GM12878 (cell line): ENCODE measurements at regions of chr1 and their contacts with region 1.

Region 1: DNA sequence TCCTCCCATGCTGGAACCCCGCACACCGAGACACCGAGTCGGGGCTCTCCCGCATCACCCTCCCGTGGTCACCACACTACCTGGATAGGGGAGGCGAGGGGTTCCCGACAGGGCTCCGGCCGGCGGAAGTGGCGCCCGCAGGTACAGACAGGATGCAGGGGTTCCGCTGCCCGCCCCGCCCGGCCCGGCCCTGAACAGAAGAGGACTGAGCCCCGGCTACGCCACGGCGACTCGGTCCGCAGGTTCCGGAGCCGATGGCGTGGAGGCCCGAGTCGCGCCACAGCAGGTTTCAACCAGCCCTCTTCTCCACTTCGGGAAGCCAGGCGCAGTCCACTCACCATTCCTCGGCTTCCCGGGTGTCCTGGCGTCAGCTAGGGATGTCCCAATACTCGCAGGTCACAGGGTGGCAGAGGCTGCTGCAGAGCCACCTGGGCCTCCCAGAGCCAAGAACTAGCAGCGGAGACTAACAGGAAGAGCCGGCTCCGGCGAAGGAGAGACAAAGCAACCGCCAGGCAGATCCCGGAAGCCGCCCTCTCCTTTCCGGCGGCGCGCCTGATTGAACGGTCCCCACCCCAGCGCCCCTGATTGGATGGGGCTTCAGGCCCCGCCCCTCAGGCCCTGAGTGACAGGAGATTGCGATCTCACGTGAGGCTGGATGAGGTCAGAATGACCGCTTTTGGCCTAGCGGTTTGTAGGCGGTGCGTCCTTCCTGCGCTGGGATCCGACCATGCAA is at the start of gene ZNF669:
- DNase-seq: peak; percentile 69
- ATAC-seq: peak; percentile 99
- H3K4me3 ChIP-seq: peak within 1 kb of the TSS; percentile 81
- H3K27ac ChIP-seq: peak within 1 kb of the TSS; percentile 84
- H3K4me1 ChIP-seq: no peaks in the 10 kb centered on the region
- H3K27me3 ChIP-seq: no peaks in the 10 kb centered on the region
- CTCF ChIP-seq: no peak
- EP300 ChIP-seq: no peak
- POLR2A ChIP-seq: peak; percentile 93
- RAD21 ChIP-seq: no peak
- polyA plus RNA-seq, gene ZNF669: 5.2 to 5.6 TPM

Region 2: GRCh38 chr1:246897302-246897701 is 206.7 kb before region 1 on chr1:
- CTCF ChIA-PET with region 1: no interaction called
- POLR2A ChIA-PET with region 1: no interaction called
- RAD21 ChIA-PET with region 1: no interaction called
- SMC1A ChIA-PET with region 1: no interaction called
- in situ Hi-C with region 1: no loop called
- intact Hi-C with region 1: no loop called
- DNase-seq: no peak
- ATAC-seq: no peak
- H3K4me3 ChIP-seq: no peak overlapping the region
- H3K27ac ChIP-seq: no peak overlapping the region
- H3K4me1 ChIP-seq: peaks cover 5% of the 10 kb centered on the region
- H3K27me3 ChIP-seq: no peaks in the 10 kb centered on the region
- CTCF ChIP-seq: no peak
- EP300 ChIP-seq: no peak
- POLR2A ChIP-seq: no peak
- RAD21 ChIP-seq: no peak

Region 3: GRCh38 chr1:247078261-247079140 is 25.5 kb before region 1 on chr1 and contains the start of gene ZNF670:
- CTCF ChIA-PET with region 1: no interaction called
- POLR2A ChIA-PET with region 1: no interaction called
- RAD21 ChIA-PET with region 1: no interaction called
- SMC1A ChIA-PET with region 1: no interaction called
- in situ Hi-C with region 1: no loop called
- intact Hi-C with region 1: loop called (anchors 2 kb)
- DNase-seq: peak; percentile 59
- ATAC-seq: peak; percentile 100
- H3K4me3 ChIP-seq: peak within 1 kb of the TSS; percentile 76
- H3K27ac ChIP-seq: peak within 1 kb of the TSS; percentile 76
- H3K4me1 ChIP-seq: no peaks in the 10 kb centered on the region; the same call in 1 of the 2 replicates
- H3K27me3 ChIP-seq: no peaks in the 10 kb centered on the region
- CTCF ChIP-seq: no peak
- EP300 ChIP-seq: no peak
- POLR2A ChIP-seq: peak; percentile 93
- RAD21 ChIP-seq: no peak
- polyA plus RNA-seq, gene ZNF670: 5.3 to 7.4 TPM